ENCODE measurements at regions of chr10 and their contacts with region 1.

Region 1: GRCh38 chr10:6382081-6382480 is 179.3 kb downstream of the PFKFB3 start:
- DNase-seq: peak in 4 of 5 donors; percentile 17 to 27 (median 20)
- H3K4me3 ChIP-seq: no peak overlapping the region
- H3K4me3 Mint-ChIP-seq: peak overlapping the region; percentile 46 to 78 (median 66)
- H3K27ac ChIP-seq: no peak overlapping the region
- H3K27ac Mint-ChIP-seq: peak overlapping the region in 3 of 7 donors; percentile 68 to 77 (median 69)
- H3K4me1 ChIP-seq: peaks cover 13% of the 10 kb centered on the region
- H3K4me1 Mint-ChIP-seq: peaks cover 12 to 20% (median 14%) of the 10 kb centered on the region in 4 donors
- H3K27me3 ChIP-seq: no peaks in the 10 kb centered on the region
- H3K27me3 Mint-ChIP-seq: no peaks in the 10 kb centered on the region

Region 2: GRCh38 chr10:6364893-6365292 is 17.2 kb before region 1 on chr10:
- CTCF ChIA-PET with region 1: interaction called, 3 read pairs
- POLR2A ChIA-PET with region 1: interaction called, 15 read pairs
- intact Hi-C with region 1: no loop called
- DNase-seq: no peak
- H3K4me3 ChIP-seq: no peak overlapping the region
- H3K4me3 Mint-ChIP-seq: no peak overlapping the region
- H3K27ac ChIP-seq: no peak overlapping the region
- H3K27ac Mint-ChIP-seq: no peak overlapping the region
- H3K4me1 ChIP-seq: no peaks in the 10 kb centered on the region
- H3K4me1 Mint-ChIP-seq: no peaks in the 10 kb centered on the region
- H3K27me3 ChIP-seq: no peaks in the 10 kb centered on the region
- H3K27me3 Mint-ChIP-seq: peaks cover 2% of the 10 kb centered on the region in 2 donors

Measured in CD4-positive, alpha-beta memory T cell (primary cell).